HAP-1 (cell line): ENCODE measurements at regions of chr3 and their contacts with region 1.

Region 1: GRCh38 chr3:48439820-48440589 is at the starts of genes CCDC51 and TMA7:
- DNase-seq: peak; percentile 93 to 99
- H3K4me3 ChIP-seq: peak within 1 kb of the TSS; percentile 87
- H3K4me1 ChIP-seq: peaks cover 11% of the 10 kb centered on the region
- H3K27me3 ChIP-seq: no peaks in the 10 kb centered on the region

Region 2: DNA sequence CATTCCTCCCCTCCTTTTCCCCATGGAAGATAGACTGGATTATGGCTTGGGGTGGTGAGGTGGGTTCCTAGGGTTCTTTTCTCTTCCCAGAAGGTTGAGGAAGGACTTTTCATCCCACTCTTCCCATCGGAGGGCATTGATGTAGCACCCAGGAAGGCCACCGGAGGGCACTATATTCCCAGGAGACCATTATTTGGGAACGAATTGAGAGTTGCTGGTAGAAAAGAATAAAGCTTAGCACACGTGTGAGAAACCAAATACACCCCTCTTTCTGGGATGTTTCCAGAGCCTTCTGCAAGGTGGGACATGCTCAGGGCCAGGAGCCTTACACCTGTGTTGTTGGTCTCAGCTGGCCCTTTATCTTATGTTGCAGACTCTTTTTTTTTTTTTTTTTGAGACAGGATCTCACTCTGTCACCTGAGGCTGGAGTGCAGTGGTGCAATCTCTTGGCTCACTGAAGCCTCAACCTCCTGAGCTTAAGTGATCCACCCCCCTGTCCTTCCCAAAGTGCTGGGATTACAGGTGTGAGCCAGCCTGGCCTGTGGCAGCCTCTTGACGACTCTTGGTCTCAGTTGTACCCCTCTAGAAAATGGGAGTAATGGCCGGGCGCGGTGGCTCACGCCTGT is 245.4 kb before region 1 on chr3:
- in situ Hi-C with region 1: loop called (anchors 5 kb)
- DNase-seq: peak; percentile 83 to 89
- H3K4me3 ChIP-seq: no peak overlapping the region
- H3K4me1 ChIP-seq: peaks cover 16% of the 10 kb centered on the region
- H3K27me3 ChIP-seq: no peaks in the 10 kb centered on the region

Region 3: GRCh38 chr3:48240711-48241491 is 199.1 kb before region 1 on chr3 and contains the start of gene ZNF589:
- in situ Hi-C with region 1: loop called (anchors 5 kb)
- DNase-seq: peak; percentile 96
- H3K4me3 ChIP-seq: peak within 1 kb of the TSS; percentile 71
- H3K4me1 ChIP-seq: peaks cover 38% of the 10 kb centered on the region
- H3K27me3 ChIP-seq: no peaks in the 10 kb centered on the region

Region 4: GRCh38 chr3:48256557-48256956 is 183.4 kb before region 1 on chr3:
- in situ Hi-C with region 1: no loop called
- DNase-seq: peak in 1 of 2 experiments; percentile 1
- H3K4me3 ChIP-seq: no peak overlapping the region
- H3K4me1 ChIP-seq: peaks cover 3% of the 10 kb centered on the region; the same call in 1 of the 2 replicates
- H3K27me3 ChIP-seq: no peaks in the 10 kb centered on the region

Region 5: GRCh38 chr3:48273594-48274211 is 166.3 kb before region 1 on chr3:
- in situ Hi-C with region 1: loop called (anchors 5 kb)
- DNase-seq: peak; percentile 61 to 76
- H3K4me3 ChIP-seq: no peak overlapping the region
- H3K4me1 ChIP-seq: peaks cover 21% of the 10 kb centered on the region
- H3K27me3 ChIP-seq: no peaks in the 10 kb centered on the region

Region 6: DNA sequence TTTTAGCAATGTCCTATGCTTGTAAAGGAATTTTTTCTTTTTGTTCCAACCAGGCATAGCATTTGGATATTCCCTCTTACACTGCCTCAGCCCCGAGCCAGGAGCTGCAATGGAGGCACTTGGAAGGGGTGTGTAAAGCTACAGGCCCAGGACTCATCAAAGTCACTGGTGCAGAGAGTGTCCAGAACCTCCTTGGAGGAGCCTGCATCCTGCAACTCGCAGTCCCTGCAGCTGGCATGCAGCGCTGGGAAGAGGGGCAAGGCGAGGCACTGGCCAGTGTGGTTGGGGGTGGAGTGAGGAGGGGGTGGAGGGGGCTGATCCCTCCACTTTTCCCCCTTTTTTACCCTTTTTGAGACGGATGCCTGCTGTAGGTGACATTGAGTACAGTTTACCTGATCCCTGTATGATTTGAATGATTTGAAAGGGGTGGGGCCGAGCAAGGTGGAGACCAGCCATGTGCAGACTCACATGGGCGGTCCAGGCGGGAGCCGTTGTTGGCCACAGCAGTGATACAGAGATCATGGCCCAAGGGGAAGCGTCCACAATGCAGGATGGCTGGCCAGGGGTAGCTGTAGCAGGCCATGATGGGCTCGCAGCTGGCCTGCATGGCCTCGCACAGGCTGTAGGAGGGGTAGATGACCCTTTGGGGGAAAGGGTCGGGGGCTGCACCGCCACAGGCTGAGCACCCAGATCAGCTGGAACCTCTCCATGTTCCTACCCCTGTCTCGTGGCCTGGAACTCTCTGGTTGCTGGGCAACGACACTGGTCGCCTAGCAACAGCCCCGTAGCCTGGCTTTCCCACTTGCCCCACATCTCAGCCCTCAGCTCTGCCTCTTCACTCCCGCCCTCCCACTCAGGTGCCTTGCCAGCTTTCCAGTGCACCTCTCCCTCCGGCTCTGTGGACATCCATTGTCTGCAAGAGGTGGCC is 558.0 kb after region 1 on chr3:
- in situ Hi-C with region 1: no loop called
- DNase-seq: peak in 1 of 2 experiments; percentile 35
- H3K4me3 ChIP-seq: no peak overlapping the region
- H3K4me1 ChIP-seq: no peaks in the 10 kb centered on the region
- H3K27me3 ChIP-seq: no peaks in the 10 kb centered on the region